B cell (primary cell): ENCODE measurements at regions of chr12 and their contacts with region 1.

Region 1: GRCh38 chr12:34218165-34219045 is 196.1 kb downstream of the ALG10 start:
- DNase-seq: peak; percentile 78
- ATAC-seq: peak; percentile 57
- H3K4me3 ChIP-seq: peak overlapping the region in 4 of 5 experiments; percentile 42 to 63 (median 50)
- H3K4me3 Mint-ChIP-seq: peak overlapping the region; percentile 82
- H3K27ac ChIP-seq: no peak overlapping the region
- H3K27ac Mint-ChIP-seq: no peak overlapping the region
- H3K4me1 ChIP-seq: peaks cover 5 to 14% of the 10 kb centered on the region in 2 donors
- H3K4me1 Mint-ChIP-seq: peaks cover 9% of the 10 kb centered on the region
- H3K27me3 ChIP-seq: peaks cover 0 to 11% (median 3%) of the 10 kb centered on the region in 4 experiments
- H3K27me3 Mint-ChIP-seq: peaks cover 7% of the 10 kb centered on the region
- CTCF ChIP-seq: peak; percentile 92

Region 2: DNA sequence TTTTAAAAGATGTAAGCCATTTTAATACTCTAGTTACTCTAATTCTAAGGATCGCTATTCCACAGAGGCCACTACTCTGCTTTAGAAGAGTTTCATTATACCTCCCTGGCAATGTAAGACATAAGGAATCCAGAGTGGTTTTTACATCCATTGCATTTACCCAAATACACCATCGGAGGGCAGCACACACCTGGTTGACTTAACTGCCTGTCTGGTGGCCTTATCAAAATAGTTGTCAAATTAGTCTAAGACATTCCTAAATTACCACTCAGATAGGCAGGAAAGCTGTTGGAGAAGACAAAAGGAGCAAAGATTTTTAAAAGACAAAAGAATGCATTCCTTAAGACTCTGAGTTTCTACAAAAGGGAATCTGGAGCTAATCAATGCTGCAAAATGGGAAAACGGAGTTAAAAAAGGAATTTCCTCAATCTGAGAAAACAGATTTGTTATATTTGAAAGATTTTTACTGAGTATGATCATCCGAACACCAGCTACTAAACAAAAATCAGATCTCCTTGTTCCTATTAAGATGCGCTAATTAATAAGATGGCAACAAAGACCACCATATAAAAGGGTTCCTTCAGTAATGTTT is 1852.8 kb before region 1 on chr12:
- CTCF ChIA-PET with region 1: no interaction called
- POLR2A ChIA-PET with region 1: no interaction called
- intact Hi-C with region 1: loop called (anchors 5 kb)
- DNase-seq: peak; percentile 60
- ATAC-seq: peak; percentile 43
- H3K4me3 ChIP-seq: no peak overlapping the region
- H3K4me3 Mint-ChIP-seq: no peak overlapping the region
- H3K27ac ChIP-seq: no peak overlapping the region
- H3K27ac Mint-ChIP-seq: no peak overlapping the region
- H3K4me1 ChIP-seq: no peaks in the 10 kb centered on the region
- H3K4me1 Mint-ChIP-seq: no peaks in the 10 kb centered on the region
- H3K27me3 ChIP-seq: no peaks in the 10 kb centered on the region
- H3K27me3 Mint-ChIP-seq: no peaks in the 10 kb centered on the region
- CTCF ChIP-seq: peak; percentile 88

Region 3: GRCh38 chr12:34033628-34034282 is 184.7 kb before region 1 on chr12:
- CTCF ChIA-PET with region 1: no interaction called
- POLR2A ChIA-PET with region 1: no interaction called
- intact Hi-C with region 1: loop called (anchors 1 kb)
- DNase-seq: peak; percentile 46
- ATAC-seq: no peak
- H3K4me3 ChIP-seq: no peak overlapping the region
- H3K4me3 Mint-ChIP-seq: no peak overlapping the region
- H3K27ac ChIP-seq: no peak overlapping the region
- H3K27ac Mint-ChIP-seq: no peak overlapping the region
- H3K4me1 ChIP-seq: no peaks in the 10 kb centered on the region
- H3K4me1 Mint-ChIP-seq: no peaks in the 10 kb centered on the region
- H3K27me3 ChIP-seq: no peaks in the 10 kb centered on the region
- H3K27me3 Mint-ChIP-seq: no peaks in the 10 kb centered on the region
- CTCF ChIP-seq: peak; percentile 79

Region 4: DNA sequence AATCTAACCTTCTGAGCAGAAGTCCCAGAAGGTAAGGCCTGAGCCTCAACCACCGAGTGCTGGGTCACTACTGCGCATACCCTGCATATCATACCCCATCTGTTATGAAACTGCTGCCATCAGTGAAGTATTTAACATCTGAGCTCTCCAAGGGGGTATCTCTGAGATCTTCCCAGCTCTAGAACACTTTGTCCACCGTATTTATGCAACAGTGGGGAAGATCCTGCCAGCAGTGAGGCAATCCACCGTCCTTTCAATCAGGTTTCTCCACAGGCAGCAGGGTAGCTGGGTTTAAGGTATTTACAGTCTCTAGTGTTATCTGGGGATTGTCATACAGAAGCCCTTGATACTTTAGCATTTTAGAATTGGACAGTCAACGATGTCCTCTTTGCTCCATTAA is 96.2 kb before region 1 on chr12:
- CTCF ChIA-PET with region 1: interaction called, 10 read pairs
- POLR2A ChIA-PET with region 1: no interaction called
- intact Hi-C with region 1: no loop called
- DNase-seq: no peak
- ATAC-seq: no peak
- H3K4me3 ChIP-seq: no peak overlapping the region
- H3K4me3 Mint-ChIP-seq: no peak overlapping the region
- H3K27ac ChIP-seq: no peak overlapping the region
- H3K27ac Mint-ChIP-seq: no peak overlapping the region
- H3K4me1 ChIP-seq: peaks cover 6 to 14% of the 10 kb centered on the region in 2 donors
- H3K4me1 Mint-ChIP-seq: peaks cover 11% of the 10 kb centered on the region
- H3K27me3 ChIP-seq: no peaks in the 10 kb centered on the region
- H3K27me3 Mint-ChIP-seq: no peaks in the 10 kb centered on the region
- CTCF ChIP-seq: no peak